ENCODE measurements at regions of chr15 and their contacts with region 1.

Region 1: DNA sequence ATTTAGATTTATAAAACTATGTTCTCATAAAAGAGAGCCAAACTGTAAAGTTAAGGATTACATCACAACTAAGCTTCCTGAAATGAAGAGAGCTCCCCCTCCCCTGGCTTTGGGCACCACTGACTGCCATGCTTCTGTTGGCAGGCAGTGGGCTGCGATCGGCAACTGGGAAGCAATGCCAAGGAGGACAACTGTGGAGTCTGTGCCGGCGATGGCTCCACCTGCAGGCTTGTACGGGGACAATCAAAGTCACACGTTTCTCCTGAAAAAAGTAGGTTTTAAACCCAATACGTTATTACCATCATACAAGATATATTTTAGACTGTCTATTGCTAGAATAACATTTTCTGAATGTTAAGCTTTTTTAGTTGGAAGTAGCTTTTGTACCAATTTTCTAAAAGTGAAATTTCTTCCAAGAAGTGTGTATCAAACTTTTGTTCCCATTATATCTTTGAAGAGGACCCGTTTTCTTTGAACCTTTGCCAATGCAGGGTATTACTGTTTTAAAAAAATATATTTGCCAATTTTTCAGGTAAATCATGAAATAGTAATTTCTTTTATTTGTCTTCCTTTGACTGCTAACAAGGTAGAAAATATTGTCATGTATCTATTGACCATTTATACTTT is 184.1 kb downstream of the ADAMTSL3 start:
- DNase-seq: peak in 3 of 5 donors; percentile 33 to 55 (median 42)
- ATAC-seq: peak in 3 of 4 donors; percentile 53 to 71 (median 63)
- H3K4me3 ChIP-seq: no peak overlapping the region
- H3K27ac ChIP-seq: no peak overlapping the region
- H3K4me1 ChIP-seq: peaks cover 0 to 10% (median 5%) of the 10 kb centered on the region in 12 donors
- H3K27me3 ChIP-seq: no peaks in the 10 kb centered on the region
- CTCF ChIP-seq: peak; percentile 16 to 62 (median 38)
- POLR2A ChIP-seq: no peak

Region 2: DNA sequence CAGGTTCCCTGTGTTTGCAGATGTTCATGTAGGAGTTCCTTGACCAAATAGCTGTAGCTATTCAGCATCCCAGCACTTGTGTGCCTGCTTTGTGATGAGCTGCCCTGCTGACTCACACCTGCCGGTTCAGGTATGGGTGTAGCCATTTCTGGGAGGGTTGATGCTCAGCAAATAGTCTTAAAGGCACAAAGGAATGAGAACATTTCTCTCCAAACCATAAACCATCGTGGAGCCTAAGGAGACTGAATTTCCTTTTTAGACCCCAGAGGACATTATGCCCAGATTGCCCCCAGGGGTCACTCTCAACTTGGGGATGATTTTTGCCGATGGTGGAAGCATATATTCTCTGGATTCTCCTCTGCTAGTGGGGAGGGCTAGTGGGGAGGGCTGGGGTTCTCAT is 103.6 kb before region 1 on chr15:
- intact Hi-C with region 1: loop called in 1 of 10 experiments (anchors 10 kb)
- DNase-seq: peak in 1 of 5 donors; percentile 26
- ATAC-seq: peak in 1 of 4 donors; percentile 55
- H3K4me3 ChIP-seq: no peak overlapping the region
- H3K27ac ChIP-seq: no peak overlapping the region
- H3K4me1 ChIP-seq: no peaks in the 10 kb centered on the region
- H3K27me3 ChIP-seq: no peaks in the 10 kb centered on the region
- CTCF ChIP-seq: peak in 9 of 12 donors; percentile 17 to 41 (median 33)
- POLR2A ChIP-seq: no peak

Region 3: DNA sequence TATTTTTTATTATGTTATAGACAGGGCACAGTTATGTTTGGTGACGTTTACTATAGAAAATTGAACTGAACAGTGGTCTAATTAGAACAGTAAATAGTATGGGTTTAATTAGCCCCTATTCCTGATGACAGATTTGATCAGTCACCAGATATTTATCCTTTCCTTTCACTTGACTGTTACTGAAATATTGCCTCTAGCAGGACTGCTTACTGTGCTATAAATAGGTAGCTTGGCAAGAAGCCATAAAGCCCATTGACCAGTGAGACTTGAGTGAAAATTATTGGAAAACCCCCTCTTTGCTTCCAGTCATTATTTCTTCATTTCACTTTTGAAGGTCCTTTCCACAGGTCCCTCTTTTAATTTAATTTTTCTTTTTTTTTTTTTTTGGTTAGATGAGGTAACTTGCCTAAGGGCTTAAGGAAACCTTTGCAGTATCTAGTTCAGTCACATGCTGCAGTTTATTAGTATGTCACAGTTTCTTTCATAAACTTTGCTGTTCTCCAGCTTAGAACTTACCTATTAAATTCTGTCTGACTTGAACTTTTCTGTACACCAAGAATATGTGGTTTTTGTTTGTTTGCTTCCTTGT is 68.5 kb before region 1 on chr15:
- intact Hi-C with region 1: loop called in 1 of 10 experiments (anchors 10 kb)
- DNase-seq: no peak
- ATAC-seq: peak in 1 of 4 donors; percentile 37
- H3K4me3 ChIP-seq: no peak overlapping the region
- H3K27ac ChIP-seq: no peak overlapping the region
- H3K4me1 ChIP-seq: peaks cover 0 to 47% (median 15%) of the 10 kb centered on the region in 12 donors
- H3K27me3 ChIP-seq: no peaks in the 10 kb centered on the region
- CTCF ChIP-seq: no peak
- POLR2A ChIP-seq: no peak

Region 4: GRCh38 chr15:83784975-83785374 is 53.1 kb before region 1 on chr15:
- intact Hi-C with region 1: no loop called
- DNase-seq: no peak
- ATAC-seq: no peak
- H3K4me3 ChIP-seq: no peak overlapping the region
- H3K27ac ChIP-seq: peak overlapping the region in 1 of 12 donors; percentile 19
- H3K4me1 ChIP-seq: peaks cover 0 to 15% (median 0%) of the 10 kb centered on the region in 12 donors
- H3K27me3 ChIP-seq: no peaks in the 10 kb centered on the region
- CTCF ChIP-seq: no peak
- POLR2A ChIP-seq: no peak

Measured in heart left ventricle (tissue), 16 donors.